ENCODE measurements at regions of chr1 and their contacts with region 1.

Region 1: DNA sequence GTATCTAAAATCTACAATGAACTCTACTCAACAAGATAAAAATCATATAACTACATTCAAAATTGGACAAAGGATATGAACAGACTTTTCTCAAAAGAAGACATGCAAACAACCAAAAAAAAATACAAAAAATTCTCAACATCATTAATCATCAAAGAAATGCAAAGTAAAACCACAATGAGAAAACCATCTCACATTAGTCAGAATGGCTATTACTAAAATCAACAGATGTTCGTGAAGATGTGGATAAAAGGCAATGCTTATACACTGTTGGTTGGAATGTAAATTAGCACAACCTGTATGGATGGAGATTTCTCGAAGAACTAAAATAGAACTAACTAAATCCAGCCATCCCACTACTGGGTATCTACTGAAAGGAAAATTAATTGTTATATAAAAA is 1080.8 kb downstream of the AMY1C start:
- DNase-seq: no peak
- ATAC-seq: no peak
- H3K4me3 ChIP-seq: no peak overlapping the region
- H3K4me3 Mint-ChIP-seq: no peak overlapping the region
- H3K27ac ChIP-seq: no peak overlapping the region
- H3K27ac Mint-ChIP-seq: no peak overlapping the region
- H3K4me1 ChIP-seq: no peaks in the 10 kb centered on the region
- H3K4me1 Mint-ChIP-seq: no peaks in the 10 kb centered on the region
- H3K27me3 ChIP-seq: no peaks in the 10 kb centered on the region
- H3K27me3 Mint-ChIP-seq: no peaks in the 10 kb centered on the region

Region 2: GRCh38 chr1:104072915-104073371 is 757.6 kb before region 1 on chr1:
- CTCF ChIA-PET with region 1: no interaction called
- POLR2A ChIA-PET with region 1: no interaction called
- intact Hi-C with region 1: no loop called
- DNase-seq: no peak
- ATAC-seq: no peak
- H3K4me3 ChIP-seq: no peak overlapping the region
- H3K4me3 Mint-ChIP-seq: peak overlapping the region in 2 of 10 donors; percentile 5 to 47
- H3K27ac ChIP-seq: no peak overlapping the region
- H3K27ac Mint-ChIP-seq: no peak overlapping the region
- H3K4me1 ChIP-seq: no peaks in the 10 kb centered on the region
- H3K4me1 Mint-ChIP-seq: no peaks in the 10 kb centered on the region
- H3K27me3 ChIP-seq: no peaks in the 10 kb centered on the region
- H3K27me3 Mint-ChIP-seq: no peaks in the 10 kb centered on the region

Region 3: GRCh38 chr1:104467590-104467989 is 362.9 kb before region 1 on chr1:
- CTCF ChIA-PET with region 1: no interaction called
- POLR2A ChIA-PET with region 1: no interaction called
- intact Hi-C with region 1: no loop called
- DNase-seq: no peak
- ATAC-seq: no peak
- H3K4me3 ChIP-seq: no peak overlapping the region
- H3K4me3 Mint-ChIP-seq: peak overlapping the region in 1 of 10 donors; percentile 1
- H3K27ac ChIP-seq: no peak overlapping the region
- H3K27ac Mint-ChIP-seq: peak overlapping the region in 1 of 9 donors; percentile 48
- H3K4me1 ChIP-seq: no peaks in the 10 kb centered on the region
- H3K4me1 Mint-ChIP-seq: peaks cover 0 to 3% (median 0%) of the 10 kb centered on the region in 7 donors
- H3K27me3 ChIP-seq: no peaks in the 10 kb centered on the region
- H3K27me3 Mint-ChIP-seq: no peaks in the 10 kb centered on the region

Region 4: DNA sequence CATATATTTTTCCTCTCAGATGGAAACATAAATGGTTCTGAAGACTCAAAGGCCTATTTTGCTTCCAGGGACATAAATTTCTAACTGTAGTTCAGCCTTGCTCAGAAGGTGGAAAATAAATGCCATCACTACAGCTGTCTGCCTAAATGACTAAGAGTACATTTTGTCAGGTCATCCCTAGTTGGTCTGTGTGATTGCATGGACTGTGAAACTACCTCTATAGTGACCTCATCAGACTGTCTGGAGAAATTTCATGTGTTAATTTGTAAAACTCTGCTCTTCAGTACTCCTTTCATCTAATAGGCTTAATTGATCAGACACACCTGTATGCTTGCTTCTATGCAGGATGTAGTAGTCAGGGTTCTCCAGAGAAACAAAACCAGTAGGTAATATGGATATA is 194.0 kb before region 1 on chr1:
- CTCF ChIA-PET with region 1: no interaction called
- POLR2A ChIA-PET with region 1: no interaction called
- intact Hi-C with region 1: no loop called
- DNase-seq: no peak
- ATAC-seq: no peak
- H3K4me3 ChIP-seq: no peak overlapping the region
- H3K4me3 Mint-ChIP-seq: no peak overlapping the region
- H3K27ac ChIP-seq: no peak overlapping the region
- H3K27ac Mint-ChIP-seq: no peak overlapping the region
- H3K4me1 ChIP-seq: no peaks in the 10 kb centered on the region
- H3K4me1 Mint-ChIP-seq: no peaks in the 10 kb centered on the region
- H3K27me3 ChIP-seq: no peaks in the 10 kb centered on the region
- H3K27me3 Mint-ChIP-seq: no peaks in the 10 kb centered on the region

Region 5: GRCh38 chr1:104853276-104853675 is 22.7 kb after region 1 on chr1:
- CTCF ChIA-PET with region 1: no interaction called
- POLR2A ChIA-PET with region 1: no interaction called
- intact Hi-C with region 1: loop called in 1 of 2 experiments (anchors 2 kb)
- DNase-seq: no peak
- ATAC-seq: no peak
- H3K4me3 ChIP-seq: no peak overlapping the region
- H3K4me3 Mint-ChIP-seq: no peak overlapping the region
- H3K27ac ChIP-seq: no peak overlapping the region
- H3K27ac Mint-ChIP-seq: no peak overlapping the region
- H3K4me1 ChIP-seq: no peaks in the 10 kb centered on the region
- H3K4me1 Mint-ChIP-seq: no peaks in the 10 kb centered on the region
- H3K27me3 ChIP-seq: peaks cover 0 to 3% of the 10 kb centered on the region in 2 donors
- H3K27me3 Mint-ChIP-seq: no peaks in the 10 kb centered on the region

Measured in naive thymus-derived CD4-positive, alpha-beta T cell (primary cell).